Activated CD4-positive, alpha-beta T cell treated with anti-CD3 and anti-CD28 coated beads for 36 hours (primary cell): ENCODE measurements at regions of chr2 and their contacts with region 1.

Region 1: DNA sequence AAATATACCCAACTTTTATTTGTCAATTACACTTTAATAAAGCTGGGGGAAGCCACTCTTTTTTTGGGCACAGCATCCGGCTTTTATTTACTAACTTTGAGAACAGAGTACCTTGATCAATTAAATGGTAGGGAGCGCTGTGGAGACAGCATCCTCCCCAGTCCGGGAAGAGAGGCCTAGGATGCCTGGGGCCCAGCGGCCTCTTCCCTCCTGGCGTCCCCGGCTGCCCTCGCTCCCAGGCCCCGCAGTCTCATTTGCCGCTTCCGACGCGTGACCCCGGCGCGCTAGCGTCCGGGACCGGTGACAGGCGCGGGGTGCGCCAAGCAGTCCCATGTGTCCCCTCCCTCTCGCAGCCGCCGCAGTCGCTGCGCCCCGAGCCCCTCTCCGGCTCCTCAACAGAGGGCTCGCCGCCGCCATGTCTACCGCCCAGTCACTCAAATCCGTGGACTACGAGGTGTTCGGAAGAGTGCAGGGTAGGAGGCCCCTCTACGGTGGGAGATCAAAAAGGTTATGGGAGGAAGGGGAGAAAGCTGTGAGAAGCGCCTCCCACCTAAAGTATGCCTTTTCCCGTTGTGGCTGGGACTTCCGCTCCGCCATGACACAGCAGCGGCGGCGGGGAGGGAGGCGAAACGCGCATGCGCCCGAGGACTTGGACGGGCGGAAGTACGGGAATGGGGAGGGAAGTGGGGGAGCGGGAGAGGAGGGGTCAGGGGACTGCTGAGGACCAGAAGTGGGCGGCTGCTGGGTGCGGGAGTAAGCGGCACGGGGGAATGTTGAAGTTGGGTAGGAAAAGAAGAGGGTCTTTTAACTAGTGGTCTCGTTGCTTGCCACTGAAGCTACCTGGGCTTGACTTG is at the start of gene ACYP2:
- DNase-seq: peak; percentile 95
- ATAC-seq: peak; percentile 90
- H3K4me3 Mint-ChIP-seq: peak within 1 kb of the TSS; percentile 85
- H3K27ac Mint-ChIP-seq: peak within 1 kb of the TSS; percentile 96
- H3K4me1 Mint-ChIP-seq: peaks cover 12% of the 10 kb centered on the region
- H3K27me3 Mint-ChIP-seq: peaks cover 2% of the 10 kb centered on the region
- total RNA-seq, gene ACYP2: 6.0 to 6.9 TPM

Region 2: GRCh38 chr2:53690876-53691275 is 424.6 kb before region 1 on chr2:
- CTCF ChIA-PET with region 1: no interaction called
- POLR2A ChIA-PET with region 1: no interaction called
- intact Hi-C with region 1: no loop called
- DNase-seq: no peak
- ATAC-seq: peak; percentile 39
- H3K4me3 Mint-ChIP-seq: no peak overlapping the region
- H3K27ac Mint-ChIP-seq: no peak overlapping the region
- H3K4me1 Mint-ChIP-seq: peaks cover 4% of the 10 kb centered on the region
- H3K27me3 Mint-ChIP-seq: no peaks in the 10 kb centered on the region

Region 3: GRCh38 chr2:53994818-53995808 is 120.4 kb before region 1 on chr2:
- CTCF ChIA-PET with region 1: no interaction called
- POLR2A ChIA-PET with region 1: no interaction called
- intact Hi-C with region 1: loop called in 1 of 2 experiments (anchors 1 kb)
- DNase-seq: no peak
- ATAC-seq: peak; percentile 94
- H3K4me3 Mint-ChIP-seq: peak overlapping the region; percentile 24
- H3K27ac Mint-ChIP-seq: peak overlapping the region; percentile 85
- H3K4me1 Mint-ChIP-seq: peaks cover 28% of the 10 kb centered on the region
- H3K27me3 Mint-ChIP-seq: no peaks in the 10 kb centered on the region

Region 4: GRCh38 chr2:54330162-54330925 is 214.8 kb after region 1 on chr2:
- CTCF ChIA-PET with region 1: no interaction called
- POLR2A ChIA-PET with region 1: no interaction called
- intact Hi-C with region 1: loop called (anchors 1 to 5 kb)
- DNase-seq: peak; percentile 94
- ATAC-seq: peak; percentile 99
- H3K4me3 Mint-ChIP-seq: peak overlapping the region; percentile 72
- H3K27ac Mint-ChIP-seq: peak overlapping the region; percentile 44
- H3K4me1 Mint-ChIP-seq: peaks cover 15% of the 10 kb centered on the region
- H3K27me3 Mint-ChIP-seq: peaks cover 15% of the 10 kb centered on the region

Region 5: DNA sequence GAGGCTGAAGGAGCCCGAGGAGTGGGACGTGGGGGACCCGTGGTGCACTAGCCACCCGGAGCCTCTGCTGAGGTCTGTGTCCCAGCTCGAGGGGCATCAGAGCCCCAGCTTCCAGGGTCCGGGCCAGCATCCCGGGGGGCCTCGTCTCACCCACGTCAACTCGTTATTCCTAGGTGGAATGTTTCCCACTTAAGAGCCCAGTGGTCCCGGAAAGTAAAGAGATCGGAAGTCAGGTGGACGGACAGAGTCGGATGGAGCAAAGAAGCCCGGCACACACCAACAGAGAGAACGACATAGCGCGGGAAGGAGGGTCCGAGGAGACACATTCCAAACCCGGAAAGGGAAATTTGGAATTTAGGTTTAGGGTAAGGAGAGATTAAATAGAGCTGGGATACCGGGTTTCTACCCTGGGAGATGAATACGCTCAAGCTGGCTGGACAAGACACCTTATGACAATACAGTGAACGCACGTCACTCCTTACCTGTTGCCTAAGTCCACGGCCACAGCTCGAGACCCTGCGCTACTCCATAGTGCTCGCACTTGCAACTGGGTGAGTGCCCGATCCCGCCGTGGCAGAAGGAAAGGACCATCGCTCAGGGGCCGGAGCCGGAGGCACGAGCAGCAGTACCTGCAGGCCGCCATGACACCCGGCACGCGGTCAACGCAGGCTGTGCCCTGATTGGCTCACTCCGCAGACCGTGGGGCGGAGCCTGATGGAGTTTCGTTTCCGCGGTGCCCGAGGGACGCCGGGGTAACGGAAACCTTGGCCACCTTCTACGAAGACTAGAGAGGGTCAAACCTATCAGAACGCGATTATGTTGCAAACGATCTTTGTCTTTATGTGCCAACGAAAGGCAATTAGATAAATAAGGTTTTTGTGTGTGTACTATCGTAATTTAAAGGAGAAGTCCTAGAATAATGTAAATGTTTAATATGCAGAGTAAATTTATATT is 1577.9 kb after region 1 on chr2 and contains the start of gene PNPT1:
- CTCF ChIA-PET with region 1: no interaction called
- POLR2A ChIA-PET with region 1: no interaction called
- intact Hi-C with region 1: loop called in 1 of 2 experiments (anchors 10 kb)
- DNase-seq: peak; percentile 97
- ATAC-seq: peak; percentile 100
- H3K4me3 Mint-ChIP-seq: peak within 1 kb of the TSS; percentile 98
- H3K27ac Mint-ChIP-seq: peak within 1 kb of the TSS; percentile 96
- H3K4me1 Mint-ChIP-seq: peaks cover 32% of the 10 kb centered on the region
- H3K27me3 Mint-ChIP-seq: no peaks in the 10 kb centered on the region
- total RNA-seq, gene PNPT1: 41.1 to 54.0 TPM